ENCODE measurements at regions of chr7 and their contacts with region 1.

Region 1: DNA sequence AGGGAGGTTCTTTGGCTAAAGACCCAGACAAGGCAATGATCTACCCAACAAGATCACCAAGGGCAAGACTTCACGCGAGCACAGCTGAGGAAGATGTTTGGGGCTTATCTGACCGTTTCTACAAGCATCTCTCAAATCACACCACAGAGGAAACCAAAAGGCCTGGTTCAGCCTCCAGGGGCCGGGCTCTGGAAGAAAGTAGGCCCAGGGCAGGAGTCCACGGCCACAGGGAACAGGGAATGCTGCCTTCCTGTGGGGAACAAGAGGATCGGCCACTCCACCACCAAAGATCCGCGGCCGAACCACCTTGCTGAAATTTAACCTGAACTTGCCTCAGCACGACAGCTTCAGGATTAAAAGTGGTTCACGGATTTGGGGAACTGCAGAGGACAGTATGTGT is 332.5 kb downstream of the PTPRN2 start:
- DNase-seq: no peak
- H3K4me3 ChIP-seq: no peak overlapping the region
- H3K27ac ChIP-seq: no peak overlapping the region
- H3K4me1 ChIP-seq: no peaks in the 10 kb centered on the region
- H3K27me3 ChIP-seq: no peaks in the 10 kb centered on the region
- CTCF ChIP-seq: no peak

Region 2: GRCh38 chr7:158289761-158290523 is 34.8 kb after region 1 on chr7:
- CTCF ChIA-PET with region 1: no interaction called
- dilution Hi-C with region 1: loop called (anchors 5 kb)
- in situ Hi-C with region 1: no loop called
- intact Hi-C with region 1: no loop called
- DNase-seq: no peak
- H3K4me3 ChIP-seq: no peak overlapping the region
- H3K27ac ChIP-seq: no peak overlapping the region
- H3K4me1 ChIP-seq: no peaks in the 10 kb centered on the region
- H3K27me3 ChIP-seq: no peaks in the 10 kb centered on the region
- CTCF ChIP-seq: no peak